Right cardiac atrium (tissue), 5 donors: ENCODE measurements at regions of chr10 and their contacts with region 1.

Region 1: GRCh38 chr10:23994479-23995046 is 214.4 kb upstream of the KIAA1217 start:
- DNase-seq: peak in 2 of 3 donors; percentile 45 to 74
- ATAC-seq: peak; percentile 74 to 78
- H3K4me3 ChIP-seq: no peak overlapping the region
- H3K27ac ChIP-seq: no peak overlapping the region
- H3K4me1 ChIP-seq: no peaks in the 10 kb centered on the region
- H3K27me3 ChIP-seq: no peaks in the 10 kb centered on the region

Region 2: GRCh38 chr10:24197263-24197662 is 202.7 kb after region 1 on chr10:
- intact Hi-C with region 1: loop called (anchors 5 kb)
- DNase-seq: no peak
- ATAC-seq: no peak
- H3K4me3 ChIP-seq: no peak overlapping the region
- H3K27ac ChIP-seq: no peak overlapping the region
- H3K4me1 ChIP-seq: no peaks in the 10 kb centered on the region
- H3K27me3 ChIP-seq: no peaks in the 10 kb centered on the region

Region 3: DNA sequence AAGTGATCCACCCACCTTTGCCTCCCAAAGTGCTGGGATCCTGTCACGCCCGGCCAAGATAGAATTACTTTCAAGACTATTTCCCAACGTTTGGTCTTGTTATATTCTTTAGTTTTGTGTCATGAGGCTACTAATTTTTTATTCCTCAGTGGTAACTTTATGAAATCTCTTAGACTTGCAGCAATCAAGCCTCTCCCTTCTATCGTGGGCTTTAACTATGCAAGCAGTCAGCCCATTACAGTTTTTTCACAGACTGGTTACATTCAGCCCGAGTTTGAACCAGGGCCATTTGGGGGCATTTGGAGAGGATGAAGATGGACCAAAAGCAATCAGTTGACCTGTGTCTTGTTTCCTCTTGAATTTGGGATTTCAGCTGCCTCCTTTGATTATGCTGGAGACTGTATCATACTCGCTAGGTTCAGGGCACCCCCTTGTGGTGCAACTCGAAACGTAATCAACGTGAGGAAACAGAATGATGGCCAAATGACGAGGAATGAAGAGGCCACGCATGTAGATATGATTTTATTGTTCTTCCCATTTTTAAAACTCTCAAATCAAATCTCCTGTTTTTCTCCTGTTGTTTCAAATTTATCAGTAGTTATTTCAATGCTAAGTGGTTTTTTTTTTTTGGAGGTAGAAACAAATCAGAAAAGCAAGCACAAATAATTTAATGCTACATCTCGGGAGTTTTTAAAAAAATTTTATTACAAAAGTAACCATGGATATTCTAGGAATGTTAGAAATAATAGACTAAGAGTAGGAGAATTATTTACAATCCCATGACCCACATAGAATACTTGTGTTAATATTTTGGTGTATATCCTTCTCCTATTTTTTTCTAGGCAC is 365.9 kb after region 1 on chr10:
- intact Hi-C with region 1: loop called (anchors 5 to 10 kb)
- DNase-seq: peak; percentile 71 to 89 (median 81)
- ATAC-seq: peak; percentile 72 to 75
- H3K4me3 ChIP-seq: no peak overlapping the region
- H3K27ac ChIP-seq: no peak overlapping the region
- H3K4me1 ChIP-seq: no peaks in the 10 kb centered on the region
- H3K27me3 ChIP-seq: no peaks in the 10 kb centered on the region

Region 4: GRCh38 chr10:24518981-24519597 is 524.5 kb after region 1 on chr10:
- intact Hi-C with region 1: loop called (anchors 5 to 10 kb)
- DNase-seq: peak; percentile 51 to 66 (median 60)
- ATAC-seq: peak; percentile 67 to 70
- H3K4me3 ChIP-seq: no peak overlapping the region
- H3K27ac ChIP-seq: no peak overlapping the region
- H3K4me1 ChIP-seq: peaks cover 1% of the 10 kb centered on the region
- H3K27me3 ChIP-seq: no peaks in the 10 kb centered on the region